ENCODE measurements at regions of chr13 and their contacts with region 1.

Region 1: DNA sequence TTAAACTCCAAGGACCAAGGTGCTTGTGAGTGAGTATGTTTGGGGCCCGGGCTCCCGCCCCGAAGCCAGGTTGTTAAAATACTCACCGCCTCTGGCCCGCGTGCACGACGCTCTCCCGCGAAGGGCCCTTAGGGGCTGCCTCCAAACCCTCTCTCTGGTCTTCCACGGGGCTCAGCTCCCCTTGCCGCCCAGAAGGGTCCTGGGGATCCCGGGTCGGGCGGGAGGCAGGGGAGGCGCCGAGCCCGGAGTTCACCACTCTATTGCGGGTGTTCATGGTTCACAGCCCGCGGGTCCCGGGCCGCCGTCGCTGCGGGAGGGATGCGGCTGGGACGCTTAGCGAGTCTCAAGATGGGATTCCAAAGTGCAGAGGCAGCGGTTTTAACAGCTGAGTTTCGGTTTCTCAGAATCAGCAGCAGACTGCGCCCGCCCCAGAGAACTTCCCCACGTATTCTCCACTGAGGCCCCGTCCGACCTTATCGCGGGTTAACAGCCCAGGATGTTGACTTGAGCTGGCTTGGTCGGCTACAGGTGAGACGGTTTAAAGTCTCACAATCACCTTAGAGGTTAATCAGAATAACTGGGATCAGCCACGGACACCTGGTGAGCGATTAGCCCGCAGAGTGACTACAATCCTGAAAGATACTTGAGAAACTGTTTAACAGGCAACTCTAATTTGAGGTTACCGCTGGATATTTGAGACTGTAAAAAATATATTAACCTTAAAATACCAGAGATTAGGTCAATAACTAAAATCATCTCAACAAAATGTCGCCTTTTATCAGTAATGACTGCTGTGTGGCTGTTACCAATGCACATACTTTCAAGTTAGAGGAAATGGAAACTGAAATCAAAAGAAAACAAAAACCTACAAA is at the start of gene EPSTI1:
- DNase-seq: peak; percentile 84
- H3K4me3 Mint-ChIP-seq: peak within 1 kb of the TSS; percentile 87
- H3K27ac Mint-ChIP-seq: peak within 1 kb of the TSS; percentile 98
- H3K4me1 Mint-ChIP-seq: peaks cover 52% of the 10 kb centered on the region
- H3K27me3 Mint-ChIP-seq: no peaks in the 10 kb centered on the region
- total RNA-seq, gene EPSTI1: 17.4 to 19.8 TPM

Region 2: GRCh38 chr13:42392716-42393572 is 599.2 kb before region 1 on chr13:
- CTCF ChIA-PET with region 1: no interaction called
- intact Hi-C with region 1: loop called (anchors 5 kb)
- DNase-seq: peak; percentile 58
- H3K4me3 Mint-ChIP-seq: peak overlapping the region; percentile 84
- H3K27ac Mint-ChIP-seq: peak overlapping the region; percentile 100
- H3K4me1 Mint-ChIP-seq: peaks cover 74% of the 10 kb centered on the region
- H3K27me3 Mint-ChIP-seq: no peaks in the 10 kb centered on the region

Region 3: GRCh38 chr13:42769650-42770049 is 222.5 kb before region 1 on chr13:
- CTCF ChIA-PET with region 1: no interaction called
- intact Hi-C with region 1: no loop called
- DNase-seq: no peak
- H3K4me3 Mint-ChIP-seq: no peak overlapping the region
- H3K27ac Mint-ChIP-seq: no peak overlapping the region
- H3K4me1 Mint-ChIP-seq: no peaks in the 10 kb centered on the region
- H3K27me3 Mint-ChIP-seq: peaks cover 25% of the 10 kb centered on the region

Region 4: GRCh38 chr13:42946927-42947326 is 45.2 kb before region 1 on chr13:
- CTCF ChIA-PET with region 1: no interaction called
- intact Hi-C with region 1: no loop called
- DNase-seq: no peak
- H3K4me3 Mint-ChIP-seq: no peak overlapping the region
- H3K27ac Mint-ChIP-seq: no peak overlapping the region
- H3K4me1 Mint-ChIP-seq: no peaks in the 10 kb centered on the region
- H3K27me3 Mint-ChIP-seq: no peaks in the 10 kb centered on the region

Region 5: GRCh38 chr13:43023289-43023951 is 31.3 kb after region 1 on chr13 and contains the start of gene DNAJC15:
- CTCF ChIA-PET with region 1: interaction called, 5 read pairs
- intact Hi-C with region 1: loop called (anchors 1 kb)
- DNase-seq: peak; percentile 88
- H3K4me3 Mint-ChIP-seq: peak within 1 kb of the TSS; percentile 98
- H3K27ac Mint-ChIP-seq: peak within 1 kb of the TSS; percentile 94
- H3K4me1 Mint-ChIP-seq: peaks cover 30% of the 10 kb centered on the region
- H3K27me3 Mint-ChIP-seq: no peaks in the 10 kb centered on the region
- total RNA-seq, gene DNAJC15: 14.5 to 16.8 TPM

Region 6: DNA sequence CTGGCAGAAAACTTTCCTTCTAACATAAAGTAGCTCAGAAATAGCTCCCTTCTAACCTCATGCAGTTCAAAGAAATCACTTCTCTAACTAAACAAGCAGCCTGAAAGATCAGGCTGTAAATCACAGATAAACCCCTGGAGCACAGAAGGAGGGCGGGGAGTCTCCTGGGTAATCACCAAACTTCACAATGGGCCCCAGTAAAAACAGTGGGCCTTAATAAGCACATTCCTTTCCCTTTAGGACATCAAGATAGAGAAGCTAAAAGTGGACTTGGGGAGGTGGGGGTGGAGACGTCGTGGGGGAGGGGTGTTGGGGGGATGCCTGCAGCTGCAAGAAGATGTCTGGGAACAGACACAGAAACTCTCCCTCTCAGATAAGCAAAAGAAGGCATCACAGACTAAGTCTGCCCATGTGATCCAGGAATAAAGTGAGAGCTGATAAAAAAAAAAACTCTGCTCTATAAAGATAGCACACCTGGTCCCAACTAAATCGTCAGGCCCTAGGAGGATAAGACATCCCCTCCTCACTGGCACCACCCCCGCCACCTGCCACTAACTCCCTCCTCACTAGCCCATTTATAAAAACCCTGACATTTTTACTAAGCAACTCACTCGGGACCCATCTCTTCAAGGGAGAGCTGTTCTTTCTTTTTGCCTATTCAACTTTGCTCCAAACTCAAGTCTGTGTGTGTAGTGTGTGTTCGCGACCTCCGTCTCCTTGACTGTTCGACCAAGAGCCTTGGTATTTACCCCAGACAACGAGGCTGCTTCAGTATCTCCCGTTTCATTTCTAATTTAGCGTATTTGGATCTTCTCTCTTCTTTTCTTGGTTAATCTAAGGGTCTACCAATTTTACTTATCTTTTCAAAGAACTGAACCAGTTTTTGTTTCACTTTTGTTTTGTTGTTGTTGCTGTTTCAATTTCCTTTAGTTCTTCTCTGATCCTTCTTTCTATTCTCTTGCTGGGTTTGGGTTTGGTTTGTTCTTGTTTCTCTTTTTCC is 63.0 kb after region 1 on chr13:
- CTCF ChIA-PET with region 1: no interaction called
- intact Hi-C with region 1: loop called (anchors 1 kb)
- DNase-seq: peak; percentile 38
- H3K4me3 Mint-ChIP-seq: no peak overlapping the region
- H3K27ac Mint-ChIP-seq: no peak overlapping the region
- H3K4me1 Mint-ChIP-seq: peaks cover 33% of the 10 kb centered on the region
- H3K27me3 Mint-ChIP-seq: no peaks in the 10 kb centered on the region

Region 7: GRCh38 chr13:43094901-43095300 is 102.8 kb after region 1 on chr13:
- CTCF ChIA-PET with region 1: interaction called, 4 read pairs
- intact Hi-C with region 1: loop called (anchors 1 kb)
- DNase-seq: no peak
- H3K4me3 Mint-ChIP-seq: no peak overlapping the region
- H3K27ac Mint-ChIP-seq: peak overlapping the region; percentile 62
- H3K4me1 Mint-ChIP-seq: peaks cover 22% of the 10 kb centered on the region
- H3K27me3 Mint-ChIP-seq: no peaks in the 10 kb centered on the region

Region 8: GRCh38 chr13:43433691-43434141 is 441.6 kb after region 1 on chr13:
- CTCF ChIA-PET with region 1: no interaction called
- intact Hi-C with region 1: no loop called
- DNase-seq: no peak
- H3K4me3 Mint-ChIP-seq: no peak overlapping the region
- H3K27ac Mint-ChIP-seq: no peak overlapping the region
- H3K4me1 Mint-ChIP-seq: no peaks in the 10 kb centered on the region
- H3K27me3 Mint-ChIP-seq: no peaks in the 10 kb centered on the region

Region 9: GRCh38 chr13:43516401-43516833 is 524.3 kb after region 1 on chr13:
- CTCF ChIA-PET with region 1: no interaction called
- intact Hi-C with region 1: no loop called
- DNase-seq: no peak
- H3K4me3 Mint-ChIP-seq: no peak overlapping the region
- H3K27ac Mint-ChIP-seq: no peak overlapping the region
- H3K4me1 Mint-ChIP-seq: no peaks in the 10 kb centered on the region
- H3K27me3 Mint-ChIP-seq: peaks cover 9% of the 10 kb centered on the region